ENCODE measurements at regions of chr2 and their contacts with region 1.

Region 1: GRCh38 chr2:117958186-117958585 is 55.7 kb downstream of the CCDC93 start:
- DNase-seq: peak; percentile 88
- H3K4me3 ChIP-seq: no peak overlapping the region
- H3K27ac ChIP-seq: peak overlapping the region; percentile 86
- H3K4me1 ChIP-seq: peaks cover 37% of the 10 kb centered on the region
- H3K27me3 ChIP-seq: no peaks in the 10 kb centered on the region
- CTCF ChIP-seq: no peak
- POLR2A ChIP-seq: no peak

Region 2: GRCh38 chr2:117814417-117815264 is 143.5 kb before region 1 on chr2 and contains the start of gene DDX18:
- CTCF ChIA-PET with region 1: interaction called, 8 read pairs
- POLR2A ChIA-PET with region 1: no interaction called
- dilution Hi-C with region 1: no loop called
- intact Hi-C with region 1: loop called (anchors 1 kb)
- DNase-seq: peak; percentile 99
- H3K4me3 ChIP-seq: peak within 1 kb of the TSS; percentile 40 to 82 (median 60)
- H3K27ac ChIP-seq: peak within 1 kb of the TSS; percentile 89
- H3K4me1 ChIP-seq: peaks cover 10% of the 10 kb centered on the region
- H3K27me3 ChIP-seq: peaks cover 0 to 2% of the 10 kb centered on the region in 2 experiments
- CTCF ChIP-seq: peak; percentile 100
- POLR2A ChIP-seq: peak; percentile 87
- total RNA-seq, gene DDX18: 47.8 and 50.4 TPM in 2 replicates

Region 3: DNA sequence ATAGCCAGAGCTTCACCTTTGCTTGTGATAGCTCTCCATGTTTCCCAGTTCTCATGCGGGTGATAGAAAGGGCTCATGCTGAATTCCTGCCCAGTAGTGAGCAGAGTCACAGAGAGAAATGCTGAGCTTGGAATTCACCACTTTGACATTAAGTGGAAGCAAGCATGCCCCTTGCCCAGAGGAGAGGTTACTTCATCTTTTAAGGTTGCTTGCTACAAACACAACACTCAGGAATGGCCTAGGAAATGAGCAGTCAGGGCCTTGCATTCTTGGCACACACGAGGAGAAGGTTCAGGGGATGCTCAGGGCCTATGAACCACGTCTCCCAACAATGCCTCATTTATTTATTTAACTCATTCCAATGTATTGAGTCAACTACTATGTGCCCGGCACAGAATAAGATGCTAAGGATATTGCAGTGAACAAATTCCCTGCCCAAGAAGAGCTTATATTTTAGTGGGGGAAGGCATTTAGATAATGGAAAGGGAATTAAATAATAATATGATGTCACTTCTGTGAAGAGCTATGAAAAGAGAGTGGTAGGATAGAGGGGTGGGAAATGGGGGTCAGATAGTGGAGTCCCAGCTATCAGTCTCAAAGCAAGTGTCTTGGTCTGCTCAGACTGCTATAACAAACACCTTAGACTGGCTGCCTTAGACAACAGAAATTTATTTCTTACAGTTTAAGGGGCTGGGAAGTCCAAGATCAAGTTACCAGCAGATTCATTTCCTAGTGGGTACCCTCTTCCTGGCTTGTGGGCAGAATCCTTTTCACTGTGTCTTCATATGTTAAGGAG is 101.6 kb before region 1 on chr2:
- CTCF ChIA-PET with region 1: no interaction called
- POLR2A ChIA-PET with region 1: interaction called, 4 read pairs
- dilution Hi-C with region 1: no loop called
- intact Hi-C with region 1: loop called (anchors 2 kb)
- DNase-seq: peak; percentile 88
- H3K4me3 ChIP-seq: no peak overlapping the region
- H3K27ac ChIP-seq: peak overlapping the region; percentile 73
- H3K4me1 ChIP-seq: peaks cover 22% of the 10 kb centered on the region
- H3K27me3 ChIP-seq: peaks cover 7 to 12% of the 10 kb centered on the region in 2 experiments
- CTCF ChIP-seq: no peak
- POLR2A ChIP-seq: peak; percentile 4

Region 4: DNA sequence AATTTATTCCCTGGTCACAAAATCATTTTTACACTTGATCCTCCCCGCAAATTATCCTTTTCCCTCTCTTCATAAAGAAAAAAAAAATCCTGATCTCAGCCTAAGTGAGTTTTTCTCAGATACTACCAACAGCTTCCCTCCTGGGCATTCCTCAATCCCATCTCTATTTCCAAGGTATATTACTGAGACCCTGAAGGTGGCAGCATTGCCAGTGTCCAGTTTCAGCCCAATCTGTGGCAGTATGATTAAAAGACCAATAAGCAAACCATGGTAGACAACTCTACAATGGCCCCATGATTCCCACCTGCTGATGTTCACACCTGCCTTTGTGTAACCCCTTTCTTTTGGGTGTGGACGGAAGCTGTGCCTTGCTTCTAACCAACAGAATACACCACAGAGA is 10.5 kb after region 1 on chr2:
- CTCF ChIA-PET with region 1: interaction called, 17 read pairs
- POLR2A ChIA-PET with region 1: no interaction called
- dilution Hi-C with region 1: no loop called
- intact Hi-C with region 1: no loop called
- DNase-seq: no peak
- H3K4me3 ChIP-seq: no peak overlapping the region
- H3K27ac ChIP-seq: no peak overlapping the region
- H3K4me1 ChIP-seq: no peaks in the 10 kb centered on the region
- H3K27me3 ChIP-seq: no peaks in the 10 kb centered on the region
- CTCF ChIP-seq: no peak
- POLR2A ChIP-seq: no peak

Region 5: GRCh38 chr2:118112771-118113334 is 154.7 kb after region 1 on chr2:
- CTCF ChIA-PET with region 1: no interaction called
- POLR2A ChIA-PET with region 1: no interaction called
- dilution Hi-C with region 1: no loop called
- intact Hi-C with region 1: loop called (anchors 2 kb)
- DNase-seq: peak; percentile 93
- H3K4me3 ChIP-seq: no peak overlapping the region
- H3K27ac ChIP-seq: peak overlapping the region; percentile 91
- H3K4me1 ChIP-seq: peaks cover 20% of the 10 kb centered on the region
- H3K27me3 ChIP-seq: no peaks in the 10 kb centered on the region
- CTCF ChIP-seq: no peak
- POLR2A ChIP-seq: peak; percentile 79

Region 6: GRCh38 chr2:118123561-118124232 is 165.5 kb after region 1 on chr2:
- CTCF ChIA-PET with region 1: no interaction called
- POLR2A ChIA-PET with region 1: no interaction called
- dilution Hi-C with region 1: no loop called
- intact Hi-C with region 1: no loop called
- DNase-seq: peak; percentile 87
- H3K4me3 ChIP-seq: no peak overlapping the region
- H3K27ac ChIP-seq: peak overlapping the region; percentile 62
- H3K4me1 ChIP-seq: peaks cover 22% of the 10 kb centered on the region
- H3K27me3 ChIP-seq: no peaks in the 10 kb centered on the region
- CTCF ChIP-seq: no peak
- POLR2A ChIP-seq: peak; percentile 39

Measured in endothelial cell of umbilical vein (primary cell).